Aorta (tissue), 5 donors: ENCODE measurements at regions of chr18 and their contacts with region 1.

Region 1: DNA sequence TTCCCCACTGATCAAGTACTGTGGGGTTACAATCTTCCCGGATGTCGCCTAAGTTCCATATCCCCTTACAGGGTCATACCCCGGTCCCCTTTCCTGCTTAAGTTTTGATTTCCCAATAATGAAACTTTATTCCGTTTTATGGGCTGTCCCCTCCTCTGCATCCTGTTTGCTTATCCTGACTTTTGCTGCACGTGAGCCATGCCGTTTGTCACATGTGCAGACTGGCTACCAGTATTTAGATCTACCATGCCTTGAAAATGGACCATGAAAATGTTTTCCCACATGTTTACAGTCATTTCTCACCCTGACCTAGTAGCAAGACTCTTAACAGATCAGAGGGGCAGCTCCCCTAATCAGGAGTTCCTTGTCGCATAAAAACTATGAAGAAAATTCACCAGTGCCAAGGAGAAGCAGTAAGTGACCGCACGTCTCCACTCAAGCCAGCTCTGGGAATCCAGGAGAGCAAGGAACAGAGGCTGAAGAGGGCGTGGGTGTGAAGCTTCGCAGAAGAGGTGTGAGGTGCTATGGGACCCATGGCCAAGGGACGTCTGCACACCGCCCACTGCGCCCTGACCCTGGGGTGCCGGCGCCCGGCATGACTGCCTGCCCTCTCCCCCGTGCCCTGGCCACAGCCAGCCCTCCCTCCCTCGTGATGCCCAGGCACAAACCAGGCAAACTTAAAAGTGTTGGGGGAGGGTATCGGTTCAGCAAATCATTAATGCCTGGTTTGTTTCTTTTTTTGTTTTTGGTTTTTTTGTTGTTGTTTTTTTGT is 440.8 kb upstream of the SALL3 start:
- DNase-seq: no peak
- ATAC-seq: no peak
- H3K4me3 ChIP-seq: no peak overlapping the region
- H3K27ac ChIP-seq: no peak overlapping the region
- H3K4me1 ChIP-seq: no peaks in the 10 kb centered on the region
- H3K27me3 ChIP-seq: peaks cover 0 to 2% of the 10 kb centered on the region in 2 donors

Region 2: DNA sequence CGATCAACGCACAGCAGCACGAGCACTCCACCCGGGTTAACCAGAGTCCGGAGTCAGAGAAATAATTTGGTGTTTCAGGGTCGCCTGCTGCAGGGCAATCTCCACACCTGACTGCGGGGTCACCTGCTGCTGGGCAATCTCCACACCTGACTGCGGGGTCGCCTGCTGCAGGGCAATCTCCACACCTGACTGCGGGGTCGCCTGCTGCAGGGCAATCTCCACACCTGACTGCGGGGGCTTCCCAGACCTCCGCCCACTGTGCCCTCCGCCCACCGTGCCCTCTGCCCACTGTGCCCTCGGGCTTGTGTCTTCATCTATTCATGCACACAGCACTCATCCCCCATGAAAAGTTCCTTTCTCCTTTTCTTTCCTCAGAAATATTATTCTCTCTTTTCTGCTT is 59.4 kb before region 1 on chr18:
- intact Hi-C with region 1: loop called in 1 of 2 experiments (anchors 10 kb)
- DNase-seq: no peak
- ATAC-seq: no peak
- H3K4me3 ChIP-seq: no peak overlapping the region
- H3K27ac ChIP-seq: no peak overlapping the region
- H3K4me1 ChIP-seq: no peaks in the 10 kb centered on the region
- H3K27me3 ChIP-seq: no peaks in the 10 kb centered on the region